HepG2 (cell line): ENCODE measurements at regions of chr2 and their contacts with region 1.

Region 1: GRCh38 chr2:127873707-127874303 is 12.0 kb downstream of the AMMECR1L start:
- DNase-seq: no peak
- ATAC-seq: no peak
- H3K4me3 ChIP-seq: no peak overlapping the region
- H3K27ac ChIP-seq: no peak overlapping the region
- H3K4me1 ChIP-seq: peaks cover 17% of the 10 kb centered on the region
- H3K27me3 ChIP-seq: no peaks in the 10 kb centered on the region
- CTCF ChIP-seq: no peak
- EP300 ChIP-seq: no peak
- POLR2A ChIP-seq: no peak
- RAD21 ChIP-seq: no peak

Region 2: GRCh38 chr2:127834951-127835350 is 38.9 kb before region 1 on chr2:
- CTCF ChIA-PET with region 1: no interaction called
- POLR2A ChIA-PET with region 1: no interaction called
- in situ Hi-C with region 1: no loop called
- intact Hi-C with region 1: no loop called
- DNase-seq: no peak
- ATAC-seq: no peak
- H3K4me3 ChIP-seq: no peak overlapping the region
- H3K27ac ChIP-seq: no peak overlapping the region
- H3K4me1 ChIP-seq: no peaks in the 10 kb centered on the region
- H3K27me3 ChIP-seq: no peaks in the 10 kb centered on the region
- CTCF ChIP-seq: no peak
- EP300 ChIP-seq: no peak
- POLR2A ChIP-seq: no peak
- RAD21 ChIP-seq: no peak

Region 3: DNA sequence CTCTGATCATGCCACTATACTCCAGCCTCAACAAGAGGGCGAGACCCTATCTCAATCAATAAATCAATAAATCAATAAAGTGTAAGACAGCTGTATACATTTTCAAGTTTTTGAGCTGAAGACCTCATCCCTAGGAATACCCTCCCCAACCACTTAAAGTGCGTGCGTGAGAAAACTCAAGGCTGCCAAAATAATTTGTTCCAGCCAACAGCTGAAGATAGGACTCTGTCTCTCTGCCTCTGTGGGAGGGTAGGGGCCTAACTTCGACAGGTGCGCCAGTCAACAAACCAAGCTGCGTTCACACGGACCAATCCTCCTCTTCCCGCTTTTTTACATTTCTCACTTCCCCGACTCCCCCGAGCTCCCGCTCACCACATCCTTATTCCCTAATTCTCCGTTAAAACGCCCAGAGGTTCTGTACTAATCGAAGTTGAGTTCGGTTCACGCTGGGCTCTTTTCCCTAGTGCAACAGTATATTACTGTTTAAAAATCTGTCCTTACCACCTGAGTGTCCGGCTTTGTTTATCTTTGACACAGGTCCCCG is 16.5 kb before region 1 on chr2:
- CTCF ChIA-PET with region 1: no interaction called
- POLR2A ChIA-PET with region 1: no interaction called
- in situ Hi-C with region 1: no loop called
- intact Hi-C with region 1: loop called (anchors 2 kb)
- DNase-seq: no peak
- ATAC-seq: peak; percentile 13
- H3K4me3 ChIP-seq: peak overlapping the region; percentile 97 to 99 (median 97)
- H3K27ac ChIP-seq: peak overlapping the region; percentile 89
- H3K4me1 ChIP-seq: peaks cover 56% of the 10 kb centered on the region
- H3K27me3 ChIP-seq: no peaks in the 10 kb centered on the region; a peak in 1 of 5 replicates
- CTCF ChIP-seq: no peak
- EP300 ChIP-seq: no peak; a peak in 1 of 4 replicates
- POLR2A ChIP-seq: no peak
- RAD21 ChIP-seq: no peak